ENCODE measurements at regions of chr1 and their contacts with region 1.

Region 1: DNA sequence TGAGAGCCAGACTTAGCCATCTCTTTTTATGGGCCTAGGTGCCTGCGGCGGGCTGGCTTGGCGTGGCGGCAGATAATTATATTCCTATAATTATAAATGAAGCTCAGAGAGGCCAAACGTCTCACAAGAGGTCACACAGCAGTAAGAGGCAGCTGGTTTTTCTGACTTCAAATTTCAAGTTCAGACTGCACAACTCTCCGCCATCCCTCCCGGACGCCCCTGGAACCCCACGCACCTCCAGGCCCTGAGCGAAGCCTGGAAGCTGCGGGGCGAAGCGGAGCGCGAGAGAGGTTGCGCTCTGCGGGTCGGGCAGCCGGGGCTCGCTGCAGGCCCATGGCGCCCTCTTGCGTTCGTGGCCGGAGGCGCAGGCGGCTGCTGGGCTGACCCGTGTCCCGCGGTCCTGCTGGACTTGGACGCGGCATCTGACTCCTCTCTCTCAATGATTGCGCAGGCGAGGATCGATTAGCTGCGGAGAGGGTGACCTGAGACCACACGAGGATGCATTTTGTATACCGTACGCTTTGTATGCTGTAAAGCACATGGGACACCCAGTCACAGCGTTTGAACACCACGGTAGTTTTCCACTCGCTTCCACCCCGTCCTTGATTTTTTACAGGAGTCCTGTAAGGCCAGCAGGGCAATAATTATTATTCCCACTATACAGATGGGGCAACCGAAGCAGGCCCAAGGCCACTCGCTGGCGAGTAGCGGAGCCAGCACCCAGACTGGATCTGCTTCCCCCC is 272.7 kb downstream of the FOXD2 start:
- DNase-seq: peak; percentile 81 to 91 (median 90)
- ATAC-seq: peak; percentile 82
- H3K4me3 ChIP-seq: no peak overlapping the region
- H3K4me1 ChIP-seq: peaks cover 30% of the 10 kb centered on the region
- CTCF ChIP-seq: peak; percentile 96

Region 2: DNA sequence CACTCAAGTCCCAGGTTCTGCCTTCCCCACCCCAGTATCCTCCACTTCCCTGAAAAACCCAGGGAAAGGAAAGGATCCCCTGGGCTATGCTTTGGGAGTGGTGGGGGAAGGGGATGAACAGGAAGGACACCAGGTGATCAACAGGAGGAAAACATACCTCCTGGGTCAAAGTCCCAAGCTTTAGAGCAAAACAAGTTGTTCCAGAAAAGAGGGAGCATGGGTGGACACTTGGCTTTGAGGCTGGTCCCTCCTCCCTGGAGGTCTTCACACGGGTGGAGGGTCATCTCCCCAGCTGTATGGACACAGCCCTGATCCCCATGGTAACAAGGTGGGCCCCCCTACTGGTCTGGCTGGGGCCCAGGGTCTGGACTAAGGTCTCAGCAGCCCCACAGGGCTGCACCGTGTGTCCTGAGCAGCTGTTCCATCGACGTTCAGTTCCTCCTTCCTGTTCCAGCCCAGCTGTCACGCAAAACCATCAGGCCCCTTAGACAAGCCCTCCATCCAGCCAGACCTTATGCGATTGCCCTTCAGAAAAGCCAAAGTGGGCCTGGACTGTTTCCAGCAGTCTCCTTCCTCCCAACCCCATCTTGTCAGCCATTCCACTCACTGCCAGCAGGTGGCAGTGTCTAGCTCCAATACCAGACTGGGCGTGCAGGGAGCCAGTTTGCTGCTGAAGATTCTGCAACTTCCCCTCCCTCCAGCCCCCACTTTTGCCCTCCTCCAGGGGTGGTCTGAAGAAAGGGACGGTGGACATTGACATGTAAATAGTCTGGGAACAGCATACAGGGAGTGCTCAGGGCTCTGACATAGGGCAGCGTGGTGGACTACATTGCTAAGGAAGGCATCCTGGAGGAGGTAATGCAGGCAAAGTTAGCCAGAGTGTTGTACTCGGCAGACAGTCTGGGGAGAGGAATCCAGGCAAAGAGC is 517.8 kb before region 1 on chr1:
- intact Hi-C with region 1: loop called in 1 of 2 experiments (anchors 10 kb)
- DNase-seq: peak; percentile 75 to 87 (median 87)
- ATAC-seq: peak; percentile 65
- H3K4me3 ChIP-seq: no peak overlapping the region
- H3K4me1 ChIP-seq: peaks cover 23% of the 10 kb centered on the region
- CTCF ChIP-seq: peak; percentile 84

Region 3: DNA sequence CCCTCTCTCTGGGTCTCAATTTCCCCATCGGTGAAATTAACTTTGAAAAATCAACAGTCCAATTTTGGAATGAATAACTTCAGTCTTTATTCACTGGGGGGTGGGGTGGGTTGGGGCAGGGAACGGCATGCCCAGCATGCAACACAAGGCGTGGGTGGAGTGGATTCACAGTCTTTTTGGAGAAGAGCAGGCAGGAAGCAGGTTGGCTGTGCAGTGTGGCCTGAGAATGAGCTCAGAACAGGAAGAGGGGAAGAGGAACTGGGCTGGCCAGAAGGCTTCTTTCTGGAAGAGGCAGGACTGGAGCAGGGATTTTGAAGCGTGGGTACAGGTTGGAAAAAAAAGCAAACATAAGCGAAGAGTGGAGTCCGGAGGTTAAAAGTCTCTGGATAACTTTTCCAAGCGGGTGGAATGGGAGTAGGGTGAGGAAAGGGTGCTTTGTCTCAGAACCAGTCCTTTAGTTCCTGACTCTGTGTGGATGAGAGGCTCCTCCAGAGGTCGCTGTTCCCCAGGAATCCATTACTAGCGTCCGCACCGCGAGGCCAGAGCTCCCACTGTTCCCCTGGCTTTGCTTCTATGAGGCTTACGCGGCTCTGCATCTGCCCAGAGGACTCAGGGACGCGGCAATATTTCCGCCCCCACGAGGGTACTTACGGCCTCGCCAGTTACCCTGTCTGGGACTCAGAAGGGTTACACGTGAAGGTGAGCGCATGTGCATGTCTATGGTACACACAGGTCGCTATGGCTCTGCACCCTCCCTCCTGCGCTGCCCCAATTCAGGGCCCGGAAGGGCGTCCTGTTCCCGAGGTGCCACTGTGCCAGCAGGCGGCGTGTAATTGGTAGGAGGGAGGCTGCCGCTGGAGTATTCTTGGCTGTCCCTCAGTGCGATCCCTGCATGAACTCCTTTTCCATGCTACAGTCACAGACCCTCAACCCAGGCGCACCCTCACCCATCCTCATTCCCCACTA is 278.1 kb before region 1 on chr1:
- intact Hi-C with region 1: loop called in 1 of 2 experiments (anchors 5 kb)
- DNase-seq: peak; percentile 84 to 95 (median 88)
- ATAC-seq: peak; percentile 75
- H3K4me3 ChIP-seq: no peak overlapping the region
- H3K4me1 ChIP-seq: peaks cover 12% of the 10 kb centered on the region
- CTCF ChIP-seq: peak; percentile 52

Region 4: DNA sequence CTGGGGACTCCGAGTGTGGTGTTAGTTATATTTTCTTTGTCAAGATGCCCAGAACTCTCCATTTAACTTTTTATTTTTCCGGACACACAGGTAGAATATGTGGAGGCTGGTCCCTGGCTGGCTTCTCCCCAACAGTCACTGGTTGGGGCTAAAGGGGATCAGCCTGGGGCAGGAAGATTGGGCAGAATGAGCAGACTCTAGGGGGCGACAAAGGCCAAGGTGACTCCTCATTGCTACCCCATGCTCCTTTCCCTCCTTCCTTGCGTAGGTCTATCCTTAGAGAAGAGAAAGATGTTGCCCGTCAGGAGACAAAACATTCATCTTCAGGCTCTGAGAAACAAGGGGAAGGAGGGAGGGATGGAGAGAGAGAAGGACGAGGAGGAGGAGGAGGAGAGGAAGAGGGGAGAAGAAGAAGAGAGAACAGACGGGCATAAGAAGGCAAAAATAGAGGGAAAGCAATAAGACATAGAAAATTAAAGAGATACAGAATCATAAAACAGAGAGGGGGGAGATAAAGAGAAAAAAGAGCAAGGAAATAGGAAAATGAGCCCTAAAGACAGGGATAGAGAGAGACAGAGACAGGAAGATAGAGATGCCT is 182.7 kb before region 1 on chr1:
- intact Hi-C with region 1: loop called in 1 of 2 experiments (anchors 10 kb)
- DNase-seq: peak in 2 of 3 donors; percentile 69 to 87
- ATAC-seq: peak; percentile 85
- H3K4me3 ChIP-seq: no peak overlapping the region
- H3K4me1 ChIP-seq: no peaks in the 10 kb centered on the region
- CTCF ChIP-seq: peak; percentile 21

Region 5: DNA sequence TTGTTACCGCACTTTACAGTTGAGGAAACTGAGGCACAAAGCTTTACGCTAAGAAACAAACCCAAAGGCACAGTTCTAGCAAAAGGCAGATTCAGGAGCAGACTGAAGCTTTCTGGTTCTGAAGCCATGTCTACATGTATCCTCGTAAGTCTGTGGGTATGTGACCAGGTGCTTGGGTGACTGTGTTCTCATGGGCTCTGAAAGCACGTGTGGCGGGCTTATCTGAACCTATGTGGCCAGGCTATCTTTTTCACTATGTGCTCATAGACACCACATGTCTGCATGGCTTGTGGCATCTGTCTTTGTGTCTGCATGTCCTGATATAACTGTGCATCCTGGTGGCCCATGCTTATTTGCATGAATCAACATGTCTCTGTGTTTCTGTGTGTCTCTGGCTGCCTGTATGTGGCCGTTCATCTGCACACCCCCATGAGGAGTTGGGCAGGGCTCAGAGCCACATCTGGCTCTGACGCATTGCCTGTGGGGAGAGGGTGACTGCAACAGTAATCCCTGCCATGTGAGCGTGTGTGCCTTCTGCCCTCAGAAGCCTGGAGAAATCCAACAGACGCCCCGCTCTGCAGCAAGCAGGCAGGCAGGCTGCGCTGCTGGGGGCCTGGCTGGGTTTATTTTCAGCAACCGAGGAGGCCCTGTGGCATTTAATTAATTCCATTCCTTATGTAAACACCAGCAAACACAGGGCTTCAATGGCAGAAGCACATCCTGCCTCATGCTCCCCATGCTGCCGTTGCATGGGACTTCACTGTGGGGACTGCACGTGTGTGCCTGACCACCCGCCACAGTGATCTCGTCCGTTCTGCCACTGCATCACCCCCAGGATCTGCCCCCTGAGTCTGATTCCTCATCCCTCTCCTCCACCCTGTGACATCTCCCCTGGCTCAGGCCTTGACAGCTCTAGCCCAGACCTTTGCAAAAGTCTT is 171.3 kb after region 1 on chr1:
- intact Hi-C with region 1: no loop called
- DNase-seq: no peak
- ATAC-seq: peak; percentile 54
- H3K4me3 ChIP-seq: no peak overlapping the region
- H3K4me1 ChIP-seq: peaks cover 2% of the 10 kb centered on the region
- CTCF ChIP-seq: no peak